RWPE1 (cell line): ENCODE measurements at regions of chr9 and their contacts with region 1.

Region 1: DNA sequence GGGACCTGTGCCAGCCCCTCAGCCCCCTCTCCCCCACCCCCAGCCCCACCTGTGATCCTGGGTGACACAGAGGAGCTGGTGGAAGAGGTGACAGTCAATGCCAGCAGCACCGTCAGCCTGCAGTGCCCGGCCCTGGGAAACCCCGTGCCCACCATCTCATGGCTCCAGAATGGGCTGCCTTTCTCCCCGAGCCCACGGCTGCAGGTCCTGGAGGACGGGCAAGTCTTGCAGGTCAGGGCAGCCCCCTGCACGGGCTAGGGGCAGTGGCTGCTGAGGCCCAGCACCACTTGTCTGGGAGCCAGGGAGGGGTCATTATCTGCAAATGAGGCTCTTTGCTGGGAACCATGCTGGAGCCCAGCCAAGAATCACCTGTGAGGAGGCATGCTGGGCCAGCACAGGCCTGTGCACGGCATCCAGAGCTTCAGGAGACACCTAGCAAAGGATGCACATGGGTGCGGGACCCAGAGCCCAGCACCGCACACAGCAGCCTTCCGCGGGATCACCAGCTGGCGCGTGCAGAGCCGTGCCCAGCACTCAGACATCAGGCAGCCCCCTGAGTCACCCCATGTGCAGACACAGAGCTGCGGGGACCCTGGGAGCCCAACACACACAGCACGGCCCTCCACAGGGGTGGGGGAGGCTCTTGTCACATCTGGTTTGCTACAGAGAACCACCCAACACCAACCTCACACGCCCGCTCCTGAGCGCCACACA is 62.0 kb upstream of the ASS1 start:
- DNase-seq: no peak
- H3K27ac ChIP-seq: no peak overlapping the region
- CTCF ChIP-seq: no peak

Region 2: DNA sequence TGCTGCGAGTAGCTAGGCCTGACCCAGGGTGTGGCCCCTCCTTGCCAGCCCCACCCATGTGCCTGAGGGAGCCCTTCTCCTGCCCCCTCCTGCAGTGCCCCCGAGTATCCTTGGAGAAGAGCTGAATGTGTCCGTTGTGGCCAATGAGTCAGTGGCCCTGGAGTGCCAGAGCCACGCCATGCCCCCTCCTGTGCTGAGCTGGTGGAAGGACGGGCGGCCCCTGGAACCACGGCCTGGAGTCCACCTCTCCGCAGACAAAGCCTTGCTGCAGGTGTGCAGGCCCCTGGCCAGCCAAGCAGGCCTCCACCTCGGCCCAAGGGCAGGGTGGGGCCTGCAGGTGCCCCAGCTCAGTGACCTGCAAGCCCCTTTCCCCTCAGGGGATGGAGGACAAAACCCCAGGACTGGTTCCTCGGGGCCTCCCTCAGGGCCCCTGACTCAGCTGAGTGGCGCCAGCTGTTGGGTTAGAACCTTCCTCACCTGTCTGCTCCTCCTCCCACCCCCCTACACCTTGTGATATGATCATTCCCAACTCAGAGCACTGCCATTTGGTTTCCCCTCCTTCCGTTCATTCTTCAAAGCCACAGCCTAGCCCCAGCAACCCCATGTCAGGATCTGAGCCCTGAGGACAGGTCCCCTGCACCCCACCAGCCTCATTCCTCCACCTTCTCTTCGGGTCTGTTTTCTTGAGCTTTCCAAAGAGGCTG is 18.0 kb before region 1 on chr9:
- CTCF ChIA-PET with region 1: no interaction called
- POLR2A ChIA-PET with region 1: no interaction called
- DNase-seq: no peak
- H3K27ac ChIP-seq: peak overlapping the region; percentile 17
- CTCF ChIP-seq: no peak

Region 3: GRCh38 chr9:130472184-130472705 is 89.5 kb after region 1 on chr9:
- CTCF ChIA-PET with region 1: no interaction called
- POLR2A ChIA-PET with region 1: interaction called, 10 read pairs
- DNase-seq: no peak
- H3K27ac ChIP-seq: 0 out of 2 replicates have a peak overlapping the region, but pooled peaks have one; percentile 1
- CTCF ChIP-seq: no peak